ENCODE measurements at regions of chr6 and their contacts with region 1.

Region 1: DNA sequence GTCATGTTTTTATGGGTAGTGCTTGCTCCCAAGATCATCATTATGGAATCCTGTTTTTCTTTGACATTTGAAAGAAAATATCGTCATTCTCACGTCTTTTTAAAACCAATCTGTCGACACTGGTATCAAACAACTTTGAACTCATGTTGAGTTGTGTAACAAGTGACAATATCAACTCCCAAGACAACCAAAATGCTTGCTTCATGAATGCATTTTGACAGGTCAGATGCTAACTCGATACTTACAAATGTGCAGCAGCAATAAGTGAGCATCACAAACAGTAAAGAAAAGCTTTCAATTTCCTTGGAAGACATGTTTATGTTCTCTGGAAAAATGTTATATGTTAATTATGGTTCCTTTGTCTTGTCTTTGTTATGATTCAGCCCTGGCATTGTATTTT is 125.9 kb downstream of the EPHA7 start:
- DNase-seq: no peak
- ATAC-seq: no peak

Region 2: DNA sequence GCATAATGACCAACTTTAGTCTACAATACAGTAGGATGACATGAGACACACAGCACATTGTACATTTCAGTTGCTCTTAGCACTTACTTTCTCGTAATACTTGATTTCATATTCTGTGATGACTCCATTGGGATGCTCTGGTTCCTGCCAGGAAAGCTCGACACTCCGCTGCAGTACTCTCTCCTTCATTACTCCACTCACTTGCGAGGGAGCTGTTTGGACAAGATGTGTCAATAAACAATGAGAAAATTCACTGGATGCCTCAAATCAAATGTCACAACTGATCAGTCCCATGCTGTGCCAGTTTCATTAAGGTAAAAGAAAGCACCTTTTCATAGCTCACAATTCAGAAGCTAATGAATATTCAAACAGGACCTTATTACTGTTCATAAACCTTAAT is 21.2 kb before region 1 on chr6:
- intact Hi-C with region 1: loop called (anchors 1 kb)
- DNase-seq: no peak
- ATAC-seq: no peak

Measured in sciatic nerve (tissue), 2 donors.